Mammary epithelial cell (primary cell): ENCODE measurements at regions of chr5 and their contacts with region 1.

Region 1: DNA sequence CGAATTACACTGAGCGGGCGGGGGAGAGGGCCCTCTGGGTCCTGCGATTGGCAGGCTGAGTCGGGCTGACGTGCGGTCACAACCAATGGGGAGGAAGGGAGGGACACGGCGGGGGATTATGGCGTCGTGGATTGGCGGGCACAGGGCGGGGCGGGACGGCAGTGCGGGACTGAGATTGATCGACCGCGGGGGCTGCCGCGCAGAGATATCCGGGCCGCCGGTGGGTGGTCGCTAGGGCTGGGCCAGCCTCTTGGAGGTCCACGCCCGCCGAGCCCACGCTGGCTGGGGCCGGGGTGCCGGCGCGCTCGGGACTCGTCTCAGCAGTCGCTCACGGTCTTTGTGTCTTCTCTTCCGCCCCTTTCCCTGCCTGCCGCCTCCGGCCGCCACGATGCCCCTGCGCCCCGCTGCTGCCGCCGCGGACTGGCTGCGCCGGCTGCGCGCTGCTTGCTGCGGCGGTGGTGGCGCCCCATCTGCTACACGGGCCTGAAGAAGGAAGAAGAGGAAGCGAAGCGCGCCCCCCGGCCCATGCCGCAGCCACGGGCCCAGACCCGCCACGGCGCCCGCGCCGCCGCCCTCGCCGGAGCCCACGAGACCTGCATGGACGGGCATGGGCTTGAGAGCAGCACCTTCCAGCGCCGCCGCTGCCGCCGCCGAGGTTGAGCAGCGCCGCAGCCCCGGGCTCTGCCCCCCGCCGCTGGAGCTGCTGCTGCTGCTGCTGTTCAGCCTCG is at the start of gene RGMB:
- DNase-seq: peak; percentile 98
- H3K4me3 ChIP-seq: peak within 1 kb of the TSS; percentile 71 to 82 (median 80)
- H3K27ac ChIP-seq: peak within 1 kb of the TSS; percentile 76
- H3K4me1 ChIP-seq: peaks cover 42% of the 10 kb centered on the region
- H3K27me3 ChIP-seq: no peaks in the 10 kb centered on the region
- CTCF ChIP-seq: peak in 1 of 2 donors; percentile 17
- total RNA-seq, gene RGMB: 22.3 to 24.8 TPM

Region 2: DNA sequence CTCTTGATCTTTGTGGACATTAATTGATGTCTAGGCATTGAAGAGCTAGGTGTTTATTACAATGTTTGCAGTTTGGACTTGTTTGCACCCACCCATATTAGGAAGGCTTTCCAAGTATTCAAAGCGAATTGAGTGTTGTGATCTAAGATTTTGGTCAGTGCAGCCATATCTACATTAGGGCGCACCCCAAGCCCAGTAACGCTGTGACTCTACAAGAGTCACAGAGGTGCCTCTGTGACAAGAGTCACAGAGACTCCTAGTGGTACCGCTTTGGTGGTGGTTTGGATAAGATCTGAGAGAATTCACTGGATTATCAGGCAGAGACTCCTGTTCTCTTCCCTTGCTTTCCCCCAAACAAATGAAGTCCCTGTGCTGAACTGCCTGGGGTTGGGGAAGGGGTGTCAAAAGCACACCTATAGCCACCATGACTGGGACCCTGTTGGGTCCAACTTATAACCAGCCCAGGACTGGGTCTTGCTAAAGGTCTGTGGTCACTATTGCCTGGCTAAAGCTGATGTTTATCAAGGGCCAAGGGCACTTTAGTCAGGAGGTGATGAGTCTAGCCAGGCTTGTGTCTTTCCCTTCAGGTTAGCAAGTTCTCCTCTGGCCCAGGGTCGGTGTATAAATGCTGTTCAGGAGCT is 1476.4 kb before region 1 on chr5:
- CTCF ChIA-PET with region 1: no interaction called
- dilution Hi-C with region 1: no loop called
- in situ Hi-C with region 1: no loop called
- intact Hi-C with region 1: loop called (anchors 10 kb)
- DNase-seq: peak; percentile 6
- H3K4me3 ChIP-seq: no peak overlapping the region
- H3K27ac ChIP-seq: no peak overlapping the region
- H3K4me1 ChIP-seq: no peaks in the 10 kb centered on the region
- H3K27me3 ChIP-seq: no peaks in the 10 kb centered on the region
- CTCF ChIP-seq: peak; percentile 27 to 45

Region 3: GRCh38 chr5:97735209-97735608 is 1038.4 kb before region 1 on chr5:
- CTCF ChIA-PET with region 1: no interaction called
- dilution Hi-C with region 1: no loop called
- in situ Hi-C with region 1: no loop called
- intact Hi-C with region 1: loop called (anchors 10 kb)
- DNase-seq: peak; percentile 95
- H3K4me3 ChIP-seq: no peak overlapping the region
- H3K27ac ChIP-seq: peak overlapping the region; percentile 39
- H3K4me1 ChIP-seq: peaks cover 12% of the 10 kb centered on the region
- H3K27me3 ChIP-seq: no peaks in the 10 kb centered on the region
- CTCF ChIP-seq: no peak

Region 4: GRCh38 chr5:98414938-98415337 is 358.7 kb before region 1 on chr5:
- CTCF ChIA-PET with region 1: interaction called, 4 read pairs
- dilution Hi-C with region 1: no loop called
- in situ Hi-C with region 1: no loop called
- intact Hi-C with region 1: loop called (anchors 5 kb)
- DNase-seq: peak; percentile 90
- H3K4me3 ChIP-seq: no peak overlapping the region
- H3K27ac ChIP-seq: peak overlapping the region; percentile 95
- H3K4me1 ChIP-seq: peaks cover 32% of the 10 kb centered on the region
- H3K27me3 ChIP-seq: no peaks in the 10 kb centered on the region
- CTCF ChIP-seq: no peak

Region 5: DNA sequence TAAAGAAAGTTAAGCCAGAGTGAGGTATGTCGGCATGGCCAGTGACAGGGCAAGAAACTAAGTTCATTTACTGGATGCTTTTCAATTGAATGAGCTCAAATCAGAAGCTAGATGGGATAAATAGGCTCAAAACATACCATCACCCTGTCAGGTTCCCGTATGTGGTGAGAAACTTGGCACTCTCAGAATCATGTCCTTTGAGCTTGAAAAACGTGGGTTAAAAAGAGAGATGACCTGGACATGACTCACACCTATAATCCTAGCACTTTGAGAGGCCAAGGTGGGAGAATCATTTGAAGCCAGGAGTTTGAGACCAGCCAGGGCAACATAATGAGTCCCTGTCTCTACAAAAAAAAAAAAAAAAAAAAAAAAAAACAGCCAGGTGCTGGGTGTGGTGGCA is 121.9 kb before region 1 on chr5:
- CTCF ChIA-PET with region 1: no interaction called
- dilution Hi-C with region 1: no loop called
- in situ Hi-C with region 1: no loop called
- intact Hi-C with region 1: no loop called
- DNase-seq: peak; percentile 14
- H3K4me3 ChIP-seq: no peak overlapping the region
- H3K27ac ChIP-seq: no peak overlapping the region
- H3K4me1 ChIP-seq: no peaks in the 10 kb centered on the region
- H3K27me3 ChIP-seq: peaks cover 2% of the 10 kb centered on the region
- CTCF ChIP-seq: no peak

Region 6: GRCh38 chr5:98827161-98827560 is 53.5 kb after region 1 on chr5:
- CTCF ChIA-PET with region 1: no interaction called
- dilution Hi-C with region 1: no loop called
- in situ Hi-C with region 1: no loop called
- intact Hi-C with region 1: loop called (anchors 1 kb)
- DNase-seq: peak; percentile 20
- H3K4me3 ChIP-seq: no peak overlapping the region
- H3K27ac ChIP-seq: no peak overlapping the region
- H3K4me1 ChIP-seq: no peaks in the 10 kb centered on the region
- H3K27me3 ChIP-seq: no peaks in the 10 kb centered on the region
- CTCF ChIP-seq: peak; percentile 38 to 52